ENCODE measurements at regions of chrX and their contacts with region 1.

Region 1: GRCh38 chrX:16687514-16687913 is 25.0 kb downstream of the CTPS2 start:
- DNase-seq: peak; percentile 31
- ATAC-seq: peak; percentile 72
- H3K4me3 ChIP-seq: no peak overlapping the region
- H3K27ac ChIP-seq: no peak overlapping the region
- H3K4me1 ChIP-seq: no peaks in the 10 kb centered on the region
- H3K27me3 ChIP-seq: no peaks in the 10 kb centered on the region
- CTCF ChIP-seq: no peak
- POLR2A ChIP-seq: no peak
- RAD21 ChIP-seq: no peak

Region 2: DNA sequence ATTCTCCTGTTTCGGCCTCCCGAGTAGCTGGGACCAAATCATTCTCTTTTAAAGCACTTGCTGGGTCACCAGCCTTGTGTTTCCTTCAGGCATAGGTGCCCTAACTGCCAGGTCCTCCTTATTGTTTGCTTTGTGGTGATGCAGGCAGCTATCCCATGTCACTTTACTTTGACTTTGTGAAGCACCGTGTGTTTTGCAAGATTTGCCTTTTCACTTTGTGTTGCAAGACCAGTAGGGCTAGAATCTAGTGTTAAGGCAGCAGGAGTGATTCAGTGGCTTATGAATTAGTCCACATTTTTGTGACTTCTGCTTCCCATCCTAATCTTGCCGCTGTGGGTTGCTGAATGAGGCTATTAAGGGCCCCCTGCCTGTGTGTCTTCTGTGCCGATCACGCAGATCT is 52.1 kb after region 1 on chrX:
- CTCF ChIA-PET with region 1: no interaction called
- POLR2A ChIA-PET with region 1: no interaction called
- dilution Hi-C with region 1: no loop called
- in situ Hi-C with region 1: no loop called
- intact Hi-C with region 1: loop called (anchors 2 kb)
- DNase-seq: no peak
- ATAC-seq: no peak
- H3K4me3 ChIP-seq: no peak overlapping the region
- H3K27ac ChIP-seq: no peak overlapping the region
- H3K4me1 ChIP-seq: no peaks in the 10 kb centered on the region
- H3K27me3 ChIP-seq: no peaks in the 10 kb centered on the region
- CTCF ChIP-seq: no peak
- POLR2A ChIP-seq: no peak
- RAD21 ChIP-seq: no peak

Region 3: GRCh38 chrX:16914058-16914457 is 226.5 kb after region 1 on chrX:
- CTCF ChIA-PET with region 1: no interaction called
- POLR2A ChIA-PET with region 1: interaction called, 10 read pairs
- dilution Hi-C with region 1: no loop called
- in situ Hi-C with region 1: no loop called
- intact Hi-C with region 1: no loop called
- DNase-seq: no peak
- ATAC-seq: no peak
- H3K4me3 ChIP-seq: no peak overlapping the region
- H3K27ac ChIP-seq: no peak overlapping the region
- H3K4me1 ChIP-seq: no peaks in the 10 kb centered on the region
- H3K27me3 ChIP-seq: peaks cover 10% of the 10 kb centered on the region
- CTCF ChIP-seq: no peak
- POLR2A ChIP-seq: no peak
- RAD21 ChIP-seq: no peak